ENCODE measurements at regions of chr2 and their contacts with region 1.

Region 1: DNA sequence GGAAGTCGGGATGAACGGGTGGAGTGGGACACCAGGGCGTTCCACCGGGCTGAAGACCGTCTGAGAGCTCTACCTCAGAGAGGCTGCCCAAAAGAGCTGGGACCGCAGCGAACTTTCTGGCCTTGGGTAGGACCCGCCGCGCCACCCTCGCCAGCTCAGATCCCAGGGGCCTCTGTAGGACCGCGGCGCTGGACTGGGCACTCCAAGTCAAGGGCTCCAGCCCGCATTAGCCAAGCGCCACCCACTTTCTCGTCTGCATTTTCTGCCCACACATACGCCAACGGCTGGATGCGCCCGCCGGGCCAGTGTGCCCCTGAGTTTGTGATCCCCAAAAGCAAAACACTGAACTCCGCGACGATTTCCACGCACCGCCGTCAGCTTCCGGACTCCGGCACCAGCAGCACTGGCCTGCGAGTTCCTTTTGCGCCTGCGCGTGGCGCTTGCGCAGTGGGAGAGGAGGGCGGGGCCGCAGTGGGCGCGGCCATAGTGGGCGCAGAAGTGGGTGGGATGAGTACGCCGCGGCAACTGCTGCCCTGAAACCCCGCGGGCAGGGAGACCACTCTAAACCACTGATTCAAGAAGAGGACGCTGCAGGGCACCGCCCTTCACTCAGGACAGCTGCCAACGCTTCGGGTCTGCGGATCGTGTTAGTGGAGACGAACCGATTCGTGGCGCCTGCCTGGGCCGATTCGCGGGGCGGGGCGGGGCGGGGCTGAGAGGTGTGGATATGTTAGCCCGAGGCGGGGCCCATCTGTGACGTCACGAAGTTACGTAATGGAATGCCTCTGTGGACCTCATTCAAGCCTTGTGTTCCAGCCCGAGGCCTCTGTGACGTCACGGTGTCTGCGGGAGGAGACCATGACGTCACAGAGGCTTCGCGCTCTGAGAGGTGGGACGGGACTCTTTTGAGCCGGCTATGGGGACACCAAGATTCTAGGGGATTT is 10.5 kb downstream of the OSR1 start:
- DNase-seq: peak; percentile 89 to 99 (median 97)
- ATAC-seq: peak; percentile 88
- H3K4me3 ChIP-seq: peak overlapping the region; percentile 76 to 96
- H3K4me3 Mint-ChIP-seq: peak overlapping the region; percentile 96
- H3K27ac ChIP-seq: peak overlapping the region; percentile 86 to 93
- H3K27ac Mint-ChIP-seq: peak overlapping the region; percentile 99
- H3K4me1 ChIP-seq: peaks cover 39% of the 10 kb centered on the region
- H3K4me1 Mint-ChIP-seq: peaks cover 36% of the 10 kb centered on the region
- H3K27me3 ChIP-seq: peaks cover 34% of the 10 kb centered on the region in 2 experiments
- H3K27me3 Mint-ChIP-seq: peaks cover 35% of the 10 kb centered on the region
- CTCF ChIP-seq: no peak

Region 2: DNA sequence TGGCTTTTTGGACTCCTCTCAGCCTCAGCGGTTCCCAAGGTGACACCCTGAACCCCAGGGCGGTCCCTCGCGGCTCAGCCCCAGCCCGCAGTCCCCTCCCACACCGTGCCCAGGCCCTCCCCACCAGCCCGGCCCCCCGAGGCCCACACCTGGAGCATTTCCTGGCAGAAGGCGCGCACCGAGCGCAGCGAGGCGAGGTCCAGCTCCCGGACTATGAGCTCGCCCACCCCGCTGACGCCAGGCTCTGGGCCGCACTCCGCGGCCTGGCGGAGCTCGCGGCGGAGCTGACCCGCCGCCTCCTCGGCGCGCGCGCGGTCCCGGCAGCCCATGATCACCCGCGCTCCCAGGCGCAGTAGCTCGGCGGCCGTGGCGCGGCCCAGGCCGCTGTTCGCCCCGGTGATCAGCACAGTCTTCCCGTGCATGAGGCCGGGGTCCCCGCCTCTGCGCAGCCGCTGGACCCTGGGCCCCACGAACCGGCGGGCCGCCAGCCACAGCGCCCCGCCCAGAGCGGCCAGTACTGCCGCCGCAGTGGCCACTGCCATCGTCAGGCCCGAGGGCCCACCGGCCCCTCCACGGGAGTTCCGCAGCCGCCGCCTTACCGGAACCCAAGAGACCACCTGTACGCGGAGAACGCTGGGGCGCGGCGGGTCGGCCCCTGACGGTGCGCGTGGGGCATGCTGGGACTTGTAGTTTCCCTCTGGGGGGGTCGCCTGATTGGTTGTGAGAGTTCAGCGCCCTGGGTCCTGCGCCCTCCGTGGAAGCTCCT is 787.7 kb before region 1 on chr2 and contains the start of gene RDH14:
- CTCF ChIA-PET with region 1: interaction called, 3 read pairs
- POLR2A ChIA-PET with region 1: interaction called, 18 read pairs
- intact Hi-C with region 1: loop called (anchors 1 to 2 kb)
- DNase-seq: peak; percentile 88 to 96 (median 94)
- ATAC-seq: peak; percentile 87
- H3K4me3 ChIP-seq: peak within 1 kb of the TSS; percentile 55 to 89
- H3K4me3 Mint-ChIP-seq: peak within 1 kb of the TSS; percentile 94
- H3K27ac ChIP-seq: peak within 1 kb of the TSS; percentile 81 to 92
- H3K27ac Mint-ChIP-seq: peak within 1 kb of the TSS; percentile 98
- H3K4me1 ChIP-seq: peaks cover 22% of the 10 kb centered on the region
- H3K4me1 Mint-ChIP-seq: peaks cover 42% of the 10 kb centered on the region
- H3K27me3 ChIP-seq: no peaks in the 10 kb centered on the region
- H3K27me3 Mint-ChIP-seq: no peaks in the 10 kb centered on the region
- CTCF ChIP-seq: no peak
- total RNA-seq, gene RDH14: 12.5 to 13.2 TPM

Region 3: GRCh38 chr2:18585526-18585925 is 762.4 kb before region 1 on chr2:
- CTCF ChIA-PET with region 1: no interaction called
- POLR2A ChIA-PET with region 1: no interaction called
- intact Hi-C with region 1: no loop called
- DNase-seq: no peak
- ATAC-seq: no peak
- H3K4me3 ChIP-seq: no peak overlapping the region
- H3K4me3 Mint-ChIP-seq: no peak overlapping the region
- H3K27ac ChIP-seq: no peak overlapping the region
- H3K27ac Mint-ChIP-seq: no peak overlapping the region
- H3K4me1 ChIP-seq: no peaks in the 10 kb centered on the region
- H3K4me1 Mint-ChIP-seq: no peaks in the 10 kb centered on the region
- H3K27me3 ChIP-seq: no peaks in the 10 kb centered on the region
- H3K27me3 Mint-ChIP-seq: no peaks in the 10 kb centered on the region
- CTCF ChIP-seq: no peak

Region 4: GRCh38 chr2:19171409-19171808 is 176.5 kb before region 1 on chr2:
- CTCF ChIA-PET with region 1: no interaction called
- POLR2A ChIA-PET with region 1: no interaction called
- intact Hi-C with region 1: no loop called
- DNase-seq: no peak
- ATAC-seq: no peak
- H3K4me3 ChIP-seq: no peak overlapping the region
- H3K4me3 Mint-ChIP-seq: no peak overlapping the region
- H3K27ac ChIP-seq: no peak overlapping the region
- H3K27ac Mint-ChIP-seq: no peak overlapping the region
- H3K4me1 ChIP-seq: no peaks in the 10 kb centered on the region
- H3K4me1 Mint-ChIP-seq: no peaks in the 10 kb centered on the region
- H3K27me3 ChIP-seq: no peaks in the 10 kb centered on the region
- H3K27me3 Mint-ChIP-seq: no peaks in the 10 kb centered on the region
- CTCF ChIP-seq: no peak

Region 5: DNA sequence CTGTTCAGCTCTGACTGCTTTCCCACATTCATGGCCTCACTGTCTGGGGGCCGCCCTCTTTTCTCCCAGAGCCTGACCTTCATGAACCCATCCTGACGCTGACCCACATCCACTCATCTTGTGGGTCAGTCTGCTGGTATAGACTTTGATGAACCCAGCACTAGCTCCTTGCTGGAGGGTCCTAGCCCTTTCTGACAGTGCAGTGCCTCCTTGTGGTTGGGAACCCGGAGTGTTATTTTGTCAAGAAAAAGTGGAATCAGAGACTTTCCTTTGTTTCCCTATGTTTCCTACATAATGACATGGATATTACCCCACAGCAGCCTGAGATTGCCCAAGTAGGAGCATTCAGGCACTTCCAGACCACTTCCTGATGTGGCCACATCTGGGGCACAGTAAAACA is 29.8 kb after region 1 on chr2:
- CTCF ChIA-PET with region 1: interaction called, 12 read pairs
- POLR2A ChIA-PET with region 1: no interaction called
- intact Hi-C with region 1: no loop called
- DNase-seq: peak in 2 of 9 experiments; percentile 12 to 28
- ATAC-seq: no peak
- H3K4me3 ChIP-seq: no peak overlapping the region
- H3K4me3 Mint-ChIP-seq: no peak overlapping the region
- H3K27ac ChIP-seq: no peak overlapping the region
- H3K27ac Mint-ChIP-seq: no peak overlapping the region
- H3K4me1 ChIP-seq: no peaks in the 10 kb centered on the region
- H3K4me1 Mint-ChIP-seq: no peaks in the 10 kb centered on the region
- H3K27me3 ChIP-seq: peaks cover 0 to 6% of the 10 kb centered on the region in 2 experiments
- H3K27me3 Mint-ChIP-seq: peaks cover 29% of the 10 kb centered on the region
- CTCF ChIP-seq: peak; percentile 23

Region 6: GRCh38 chr2:19408592-19408991 is 60.7 kb after region 1 on chr2:
- CTCF ChIA-PET with region 1: no interaction called
- POLR2A ChIA-PET with region 1: no interaction called
- intact Hi-C with region 1: no loop called
- DNase-seq: no peak
- ATAC-seq: no peak
- H3K4me3 ChIP-seq: no peak overlapping the region
- H3K4me3 Mint-ChIP-seq: no peak overlapping the region
- H3K27ac ChIP-seq: no peak overlapping the region
- H3K27ac Mint-ChIP-seq: no peak overlapping the region
- H3K4me1 ChIP-seq: no peaks in the 10 kb centered on the region
- H3K4me1 Mint-ChIP-seq: no peaks in the 10 kb centered on the region
- H3K27me3 ChIP-seq: no peaks in the 10 kb centered on the region
- H3K27me3 Mint-ChIP-seq: peaks cover 17% of the 10 kb centered on the region
- CTCF ChIP-seq: no peak

Region 7: GRCh38 chr2:19901442-19902215 is 553.7 kb after region 1 on chr2 and contains the start of gene TTC32:
- CTCF ChIA-PET with region 1: no interaction called
- POLR2A ChIA-PET with region 1: interaction called, 5 read pairs
- intact Hi-C with region 1: loop called (anchors 1 to 2 kb)
- DNase-seq: peak; percentile 87 to 96 (median 93)
- ATAC-seq: peak; percentile 86
- H3K4me3 ChIP-seq: peak within 1 kb of the TSS; percentile 83
- H3K4me3 Mint-ChIP-seq: peak within 1 kb of the TSS; percentile 91
- H3K27ac ChIP-seq: peak within 1 kb of the TSS; percentile 89 to 94
- H3K27ac Mint-ChIP-seq: peak within 1 kb of the TSS; percentile 96
- H3K4me1 ChIP-seq: peaks cover 33% of the 10 kb centered on the region
- H3K4me1 Mint-ChIP-seq: peaks cover 30% of the 10 kb centered on the region
- H3K27me3 ChIP-seq: peaks cover 0 to 3% of the 10 kb centered on the region in 2 experiments
- H3K27me3 Mint-ChIP-seq: peaks cover 4% of the 10 kb centered on the region
- CTCF ChIP-seq: no peak
- total RNA-seq, gene TTC32: 33.7 to 35.8 TPM

Region 8: DNA sequence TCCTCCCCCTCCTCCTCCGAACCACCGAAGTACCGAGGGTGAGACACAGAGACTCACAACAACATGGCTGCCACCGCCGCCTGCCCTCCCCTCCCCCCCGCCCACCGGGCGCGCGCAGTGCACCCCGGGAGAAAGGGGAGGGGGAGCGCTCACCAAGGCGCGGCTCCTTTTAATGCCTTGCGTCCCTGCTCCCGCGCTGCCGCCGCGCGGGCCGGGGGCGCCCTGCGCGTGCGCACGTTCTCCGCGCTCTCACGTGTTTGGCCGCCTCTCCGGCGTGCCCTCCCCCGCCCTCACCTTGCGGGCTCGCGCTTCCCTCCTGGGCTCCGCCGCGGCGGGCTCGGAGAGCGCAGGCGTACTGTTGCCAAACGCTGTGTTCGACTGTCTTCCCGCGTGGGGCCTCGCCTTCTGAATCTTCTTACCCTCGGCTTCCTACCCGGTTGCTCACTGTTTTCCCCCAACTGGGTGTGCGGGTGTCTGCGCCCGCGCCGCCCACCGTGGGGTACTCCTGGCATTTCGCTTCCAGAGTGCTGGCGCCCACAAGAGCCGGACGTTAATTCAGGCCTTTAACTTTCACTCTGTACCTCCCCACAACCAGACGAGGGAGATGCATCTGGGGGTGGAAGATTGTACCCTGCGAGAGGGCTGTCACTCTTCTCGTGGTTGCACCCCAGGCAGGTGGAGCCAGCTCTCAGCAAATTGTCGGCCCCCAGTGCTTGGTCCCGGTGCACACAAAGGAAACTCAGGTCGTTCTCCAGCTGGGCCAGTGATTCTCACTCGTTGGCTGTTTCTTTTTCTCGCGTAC is 1003.1 kb after region 1 on chr2 and contains the start of gene PUM2:
- CTCF ChIA-PET with region 1: no interaction called
- POLR2A ChIA-PET with region 1: no interaction called
- intact Hi-C with region 1: loop called (anchors 2 to 5 kb)
- DNase-seq: peak; percentile 89 to 99 (median 96)
- ATAC-seq: peak; percentile 79
- H3K4me3 ChIP-seq: peak within 1 kb of the TSS; percentile 75 to 82
- H3K4me3 Mint-ChIP-seq: no peak within 1 kb of the TSS
- H3K27ac ChIP-seq: peak within 1 kb of the TSS; percentile 89 to 94
- H3K27ac Mint-ChIP-seq: peak within 1 kb of the TSS; percentile 82
- H3K4me1 ChIP-seq: peaks cover 47% of the 10 kb centered on the region
- H3K4me1 Mint-ChIP-seq: peaks cover 39% of the 10 kb centered on the region
- H3K27me3 ChIP-seq: no peaks in the 10 kb centered on the region
- H3K27me3 Mint-ChIP-seq: no peaks in the 10 kb centered on the region
- CTCF ChIP-seq: no peak
- total RNA-seq, gene PUM2: 91.3 to 93.5 TPM

Region 9: DNA sequence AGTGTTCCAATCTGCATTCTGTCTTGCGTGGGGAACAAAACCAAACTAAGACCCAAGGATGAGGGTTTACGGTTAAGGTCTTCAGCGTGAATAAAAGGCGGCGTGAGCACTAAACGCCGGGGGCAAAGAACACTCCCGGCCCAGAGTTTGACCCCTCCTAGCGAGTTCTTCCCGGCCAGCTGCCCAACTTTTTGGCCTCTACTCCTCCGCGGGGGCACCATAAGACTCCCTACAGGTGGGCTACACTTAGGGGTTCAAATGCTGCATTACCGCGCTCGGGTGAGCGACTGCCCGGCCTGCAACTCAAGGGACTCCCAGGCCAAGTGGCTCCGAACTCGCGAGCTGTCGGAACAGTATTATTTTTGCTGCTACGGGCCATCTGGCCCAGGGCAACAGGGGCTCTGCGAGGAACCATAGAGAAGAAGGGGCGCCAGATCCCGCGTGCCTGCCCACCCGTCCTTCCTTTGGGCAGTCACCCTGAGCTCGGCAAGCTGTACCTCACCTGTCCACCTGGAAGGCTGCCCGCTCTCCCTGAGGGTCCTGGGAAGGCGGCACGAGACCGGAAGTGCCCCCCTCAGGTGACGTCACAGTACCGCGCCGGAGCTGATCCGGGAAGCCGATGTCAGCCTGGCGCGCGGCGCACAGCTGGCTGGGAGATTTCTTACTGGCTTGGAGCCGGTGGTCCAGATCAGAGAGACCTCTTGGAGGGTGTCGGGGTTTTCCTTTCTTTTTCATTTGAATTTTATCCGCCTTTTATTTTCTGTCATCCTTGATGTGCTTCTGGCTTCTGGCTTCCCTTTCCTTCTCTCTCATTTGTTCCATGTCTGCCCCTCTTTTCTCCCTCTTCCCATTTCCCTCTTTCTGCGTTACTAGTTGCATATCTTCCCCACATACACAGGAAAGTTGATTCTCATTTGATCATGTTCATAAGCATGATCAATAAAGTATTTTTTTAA is 1474.9 kb after region 1 on chr2 and contains the start of gene LDAH:
- CTCF ChIA-PET with region 1: no interaction called
- POLR2A ChIA-PET with region 1: no interaction called
- intact Hi-C with region 1: loop called (anchors 5 kb)
- DNase-seq: peak; percentile 67 to 92 (median 86)
- ATAC-seq: peak; percentile 84
- H3K4me3 ChIP-seq: peak within 1 kb of the TSS; percentile 79 to 86
- H3K4me3 Mint-ChIP-seq: peak within 1 kb of the TSS; percentile 97
- H3K27ac ChIP-seq: peak within 1 kb of the TSS; percentile 89 to 94
- H3K27ac Mint-ChIP-seq: peak within 1 kb of the TSS; percentile 99
- H3K4me1 ChIP-seq: no peaks in the 10 kb centered on the region
- H3K4me1 Mint-ChIP-seq: peaks cover 28% of the 10 kb centered on the region
- H3K27me3 ChIP-seq: no peaks in the 10 kb centered on the region
- H3K27me3 Mint-ChIP-seq: no peaks in the 10 kb centered on the region
- CTCF ChIP-seq: no peak
- total RNA-seq, gene LDAH: 3.0 to 4.6 TPM

Measured in CD8-positive, alpha-beta T cell (primary cell).